Left ventricle myocardium superior (tissue), 1 donor: ENCODE measurements at regions of chr6 and their contacts with region 1.

Region 1: DNA sequence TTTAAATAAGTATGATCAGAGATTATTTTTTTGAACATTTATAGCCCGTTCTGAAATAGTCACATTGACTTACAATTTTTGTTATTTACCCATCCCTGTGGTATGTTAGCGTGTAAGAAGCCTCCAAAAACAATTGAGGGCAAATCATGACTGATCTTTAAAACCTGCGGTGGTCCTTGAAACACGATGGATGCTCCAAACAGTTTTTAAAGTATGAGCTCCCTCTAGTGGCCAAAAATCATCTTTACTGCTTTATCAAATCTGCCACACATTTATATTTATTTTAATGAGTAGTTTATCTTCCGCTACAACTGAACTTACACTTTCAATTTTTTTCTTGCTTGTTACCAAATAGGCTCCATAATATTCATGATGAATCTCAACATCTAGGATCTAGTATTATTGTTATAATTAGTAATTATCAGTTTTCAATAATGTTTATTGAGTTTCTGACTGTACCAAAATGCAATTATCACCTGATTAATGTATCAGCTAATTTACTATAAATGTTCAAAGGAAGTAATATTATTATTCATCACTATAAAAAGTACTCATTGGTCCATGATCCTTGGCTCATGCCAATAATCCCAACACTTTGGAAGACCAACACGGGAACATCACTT is 52.2 kb downstream of the MARCKS start:
- DNase-seq: no peak
- ATAC-seq: no peak

Region 2: DNA sequence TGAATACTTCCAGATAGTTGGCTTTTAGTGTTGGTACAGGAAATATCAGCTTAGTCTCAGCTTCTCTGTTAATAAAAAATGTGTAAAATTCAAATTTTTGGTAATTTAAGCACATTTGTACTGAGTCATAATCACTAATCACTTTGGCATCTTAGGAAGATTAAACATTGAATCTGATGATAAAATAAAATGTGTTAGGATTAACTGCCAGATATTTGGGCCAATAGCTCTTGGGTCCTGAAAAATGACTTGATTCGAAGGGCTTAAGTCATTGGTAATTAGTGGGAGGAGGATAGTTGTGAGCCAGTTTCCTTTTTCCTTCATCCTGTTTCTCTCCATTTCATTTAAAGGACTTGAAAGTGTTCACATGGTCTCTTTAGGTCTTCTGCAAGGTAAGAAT is 1136.2 kb before region 1 on chr6:
- intact Hi-C with region 1: loop called (anchors 10 kb)
- DNase-seq: no peak
- ATAC-seq: no peak

Region 3: DNA sequence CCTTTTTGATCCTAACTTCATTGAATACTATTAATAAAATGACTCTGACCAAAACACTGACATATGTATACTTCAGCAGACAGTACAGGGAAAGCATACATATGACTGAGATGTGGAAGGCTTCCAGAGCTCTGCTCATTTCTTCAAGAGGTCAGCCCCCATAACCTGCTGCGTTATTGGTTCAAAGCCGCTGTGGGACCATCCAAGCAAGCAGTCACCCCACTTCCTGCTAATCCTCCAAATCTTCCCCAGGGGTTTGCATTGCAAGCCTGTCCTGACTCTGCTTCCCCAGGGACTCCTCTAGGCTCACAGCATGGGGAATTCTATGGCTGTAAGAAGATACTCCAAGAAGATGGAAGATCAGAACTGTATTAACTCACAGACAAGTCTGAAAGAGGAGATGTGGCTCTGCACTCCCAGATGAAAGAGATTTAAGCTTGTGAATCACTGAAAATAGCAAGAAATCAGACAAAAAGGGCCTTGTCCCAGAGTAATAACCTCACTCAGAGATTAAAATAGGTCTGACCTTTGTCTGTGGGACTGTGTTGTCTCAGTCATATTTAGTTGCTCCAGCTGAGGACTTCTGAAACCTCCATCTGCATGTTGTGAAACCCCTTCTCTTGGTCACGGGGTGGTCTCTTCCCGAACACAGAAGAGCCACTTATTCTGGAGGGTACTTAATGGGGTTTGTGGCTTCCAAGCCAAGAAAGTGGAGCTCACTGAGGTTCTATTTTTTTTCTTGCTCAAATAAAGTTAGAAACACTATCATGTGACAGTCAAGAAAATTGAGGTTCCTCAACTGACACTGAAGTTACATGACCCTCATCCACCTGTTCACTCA is 153.7 kb before region 1 on chr6:
- intact Hi-C with region 1: no loop called
- DNase-seq: no peak
- ATAC-seq: peak; percentile 32